ENCODE measurements at regions of chr14 and their contacts with region 1.

Region 1: GRCh38 chr14:58107947-58108552 is 44.0 kb downstream of the ARMH4 start:
- DNase-seq: peak; percentile 44
- ATAC-seq: no peak
- H3K4me3 ChIP-seq: no peak overlapping the region
- H3K27ac ChIP-seq: no peak overlapping the region
- H3K4me1 ChIP-seq: no peaks in the 10 kb centered on the region
- H3K27me3 ChIP-seq: no peaks in the 10 kb centered on the region
- CTCF ChIP-seq: peak; percentile 69
- EP300 ChIP-seq: no peak
- POLR2A ChIP-seq: no peak
- RAD21 ChIP-seq: peak; percentile 55

Region 2: GRCh38 chr14:58166005-58166983 is 58.2 kb after region 1 on chr14:
- CTCF ChIA-PET with region 1: interaction called, 16 read pairs
- POLR2A ChIA-PET with region 1: no interaction called
- in situ Hi-C with region 1: loop called (anchors 5 kb)
- intact Hi-C with region 1: loop called (anchors 1 kb)
- DNase-seq: peak; percentile 29
- ATAC-seq: peak; percentile 76
- H3K4me3 ChIP-seq: no peak overlapping the region
- H3K27ac ChIP-seq: no peak overlapping the region
- H3K4me1 ChIP-seq: peaks cover 8% of the 10 kb centered on the region
- H3K27me3 ChIP-seq: no peaks in the 10 kb centered on the region
- CTCF ChIP-seq: peak; percentile 80
- EP300 ChIP-seq: no peak
- POLR2A ChIP-seq: no peak
- RAD21 ChIP-seq: no peak

Region 3: DNA sequence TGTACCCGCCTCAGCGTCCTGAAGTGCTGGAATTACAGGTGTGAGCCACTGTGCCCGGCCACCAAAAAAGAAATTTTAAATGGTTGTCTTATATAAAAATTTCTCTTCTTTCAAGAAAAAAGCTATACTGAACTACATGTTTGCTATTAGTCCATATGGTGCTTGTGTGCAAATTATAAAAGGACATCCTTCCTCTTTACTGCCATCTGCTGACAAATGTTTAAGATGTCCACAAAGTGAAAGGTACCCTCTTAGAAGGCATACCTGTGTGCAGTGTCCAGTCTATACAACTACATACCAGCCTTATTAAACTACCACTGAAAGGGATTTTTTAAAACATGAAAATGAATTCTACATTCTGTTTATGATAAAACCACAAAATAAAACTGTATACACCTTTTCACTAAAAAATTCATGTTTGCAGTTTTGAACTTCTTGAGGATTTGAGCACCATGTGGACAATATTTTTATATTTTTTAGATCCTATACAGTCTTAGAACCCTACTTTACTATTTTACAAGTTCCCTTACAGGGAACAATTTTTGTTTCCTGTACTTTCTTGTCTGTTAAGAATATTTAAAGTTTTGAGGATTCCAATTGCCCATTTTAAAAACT is 254.9 kb after region 1 on chr14:
- CTCF ChIA-PET with region 1: interaction called, 4 read pairs
- POLR2A ChIA-PET with region 1: no interaction called
- in situ Hi-C with region 1: loop called (anchors 25 kb)
- intact Hi-C with region 1: loop called (anchors 1 kb)
- DNase-seq: peak; percentile 41
- ATAC-seq: peak; percentile 89
- H3K4me3 ChIP-seq: no peak overlapping the region
- H3K27ac ChIP-seq: no peak overlapping the region
- H3K4me1 ChIP-seq: no peaks in the 10 kb centered on the region
- H3K27me3 ChIP-seq: no peaks in the 10 kb centered on the region
- CTCF ChIP-seq: peak; percentile 52
- EP300 ChIP-seq: no peak
- POLR2A ChIP-seq: no peak
- RAD21 ChIP-seq: no peak

Measured in HepG2 (cell line).